Sigmoid colon (tissue), 7 donors: ENCODE measurements at regions of chr5 and their contacts with region 1.

Region 1: DNA sequence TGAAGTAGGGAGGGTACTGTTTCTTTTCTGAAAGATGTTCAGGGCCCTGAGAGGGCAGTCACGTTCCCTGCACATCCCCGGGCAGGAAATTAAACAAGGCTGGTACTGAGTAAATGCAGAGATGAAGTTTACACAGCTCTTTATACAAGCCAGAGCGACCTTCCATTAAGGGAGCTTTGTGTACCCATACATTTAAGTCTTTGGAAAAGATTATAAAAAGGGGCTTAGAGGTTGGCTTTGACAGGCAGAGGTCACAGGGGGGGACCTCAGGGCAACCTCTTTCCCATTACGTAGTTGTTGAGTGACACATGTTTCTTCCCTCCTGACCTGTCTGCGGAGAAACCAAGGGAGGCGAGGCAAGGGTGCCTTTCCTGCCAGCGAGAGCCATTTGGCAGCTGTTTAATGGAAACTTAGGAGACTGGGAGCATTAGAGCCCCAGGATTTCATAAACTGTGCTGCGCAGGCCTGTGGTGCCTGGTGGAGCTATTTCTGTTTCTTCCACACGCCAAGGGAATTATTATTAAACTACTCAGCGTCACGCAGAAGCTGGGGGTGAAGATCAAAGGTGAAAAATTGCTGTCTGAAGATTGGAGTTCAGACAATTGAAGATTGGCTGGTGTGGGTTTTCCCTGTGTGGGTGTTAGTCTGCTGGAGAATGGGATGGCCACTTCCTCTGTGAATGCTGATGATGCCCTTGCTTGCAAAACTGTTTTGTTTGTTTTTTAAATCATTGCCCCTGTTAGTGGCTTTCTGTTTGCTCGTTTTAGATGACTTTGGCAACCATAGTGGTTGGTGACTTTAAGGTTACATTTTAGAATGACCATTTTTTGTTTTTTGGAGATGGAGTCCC is 3.2 kb upstream of the SMIM32 start:
- DNase-seq: peak; percentile 74
- H3K4me3 ChIP-seq: no peak overlapping the region
- H3K27ac ChIP-seq: peak overlapping the region in 3 of 4 donors; percentile 55 to 73 (median 71)
- H3K4me1 ChIP-seq: peaks cover 0 to 40% (median 37%) of the 10 kb centered on the region in 4 donors
- H3K27me3 ChIP-seq: peaks cover 6 to 28% (median 22%) of the 10 kb centered on the region in 3 donors
- CTCF ChIP-seq: no peak
- EP300 ChIP-seq: peak in 2 of 4 donors; percentile 9 to 13
- POLR2A ChIP-seq: no peak

Region 2: DNA sequence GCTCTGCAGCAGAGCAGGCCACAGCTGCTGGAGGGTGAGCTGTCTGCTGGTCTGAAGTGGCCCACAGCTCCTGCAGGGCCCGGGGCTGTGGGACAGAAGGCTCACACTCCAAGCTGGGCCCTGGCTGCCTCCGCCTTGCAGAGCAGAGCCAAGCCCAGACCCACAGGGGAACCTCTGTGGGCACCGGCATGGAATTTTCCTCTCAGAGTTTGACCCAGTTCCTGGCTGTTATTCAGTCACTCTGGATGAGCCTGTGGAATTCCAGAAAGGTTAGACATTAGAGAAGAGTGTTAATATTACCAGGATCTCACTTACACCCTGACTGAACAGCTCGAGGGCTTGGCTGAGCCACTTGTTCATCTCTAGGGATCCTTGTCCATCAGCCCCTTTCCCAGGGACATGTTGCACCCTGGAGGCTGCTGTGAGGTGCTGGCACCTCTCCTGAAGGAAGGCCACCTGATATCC is 318.0 kb before region 1 on chr5:
- intact Hi-C with region 1: loop called (anchors 5 kb)
- DNase-seq: no peak
- H3K4me3 ChIP-seq: no peak overlapping the region
- H3K27ac ChIP-seq: peak overlapping the region; percentile 17 to 70 (median 37)
- H3K4me1 ChIP-seq: peaks cover 0 to 39% (median 29%) of the 10 kb centered on the region in 4 donors
- H3K27me3 ChIP-seq: no peaks in the 10 kb centered on the region
- CTCF ChIP-seq: no peak
- EP300 ChIP-seq: no peak
- POLR2A ChIP-seq: no peak

Region 3: DNA sequence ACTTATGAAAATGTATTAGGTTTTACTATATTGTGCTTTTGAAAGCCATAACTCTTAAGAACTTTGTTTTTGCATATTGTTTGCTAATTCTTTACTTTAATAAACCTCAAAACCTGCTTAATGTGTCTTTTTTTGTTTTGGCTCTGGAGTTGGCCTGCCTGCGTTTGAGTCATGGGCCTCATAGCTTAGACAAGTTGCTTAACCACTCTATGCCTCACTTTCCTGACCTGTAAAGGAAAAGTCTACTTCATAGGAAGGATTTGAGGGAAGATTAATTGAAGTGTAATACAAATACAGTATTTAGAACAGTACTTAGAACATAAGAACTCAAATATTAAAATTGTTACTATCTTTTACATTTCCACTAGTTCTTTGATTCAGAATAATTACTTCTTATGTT is 13.6 kb before region 1 on chr5:
- intact Hi-C with region 1: no loop called
- DNase-seq: no peak
- H3K4me3 ChIP-seq: no peak overlapping the region
- H3K27ac ChIP-seq: no peak overlapping the region
- H3K4me1 ChIP-seq: no peaks in the 10 kb centered on the region
- H3K27me3 ChIP-seq: no peaks in the 10 kb centered on the region
- CTCF ChIP-seq: no peak
- EP300 ChIP-seq: no peak
- POLR2A ChIP-seq: no peak